PC-9 (cell line): ENCODE measurements at regions of chr6 and their contacts with region 1.

Region 1: GRCh38 chr6:117352466-117353081 is 73.2 kb downstream of the ROS1 start:
- DNase-seq: no peak
- H3K4me3 ChIP-seq: no peak overlapping the region
- H3K27ac ChIP-seq: no peak overlapping the region
- H3K4me1 ChIP-seq: no peaks in the 10 kb centered on the region
- H3K27me3 ChIP-seq: no peaks in the 10 kb centered on the region
- CTCF ChIP-seq: peak; percentile 85

Region 2: DNA sequence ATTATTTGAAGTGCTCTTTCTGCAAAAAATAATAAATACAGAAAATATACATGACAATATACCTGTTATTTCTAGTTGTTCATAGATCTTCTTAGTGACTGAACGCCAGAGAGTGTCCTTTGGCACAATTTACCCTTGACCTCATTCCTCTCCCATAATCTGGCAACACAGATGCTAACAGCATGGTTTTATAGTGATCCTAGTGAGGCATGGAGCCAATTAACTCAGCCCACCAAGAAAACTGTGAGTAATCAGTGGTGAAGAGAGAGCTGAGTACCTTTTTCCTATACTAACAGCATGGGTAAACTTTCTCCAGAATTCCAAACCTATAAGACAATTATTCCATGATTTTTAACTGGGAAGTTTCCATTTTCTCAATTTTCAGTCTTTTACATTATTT is 26.2 kb before region 1 on chr6:
- CTCF ChIA-PET with region 1: no interaction called
- POLR2A ChIA-PET with region 1: no interaction called
- intact Hi-C with region 1: no loop called
- DNase-seq: no peak
- H3K4me3 ChIP-seq: no peak overlapping the region
- H3K27ac ChIP-seq: no peak overlapping the region
- H3K4me1 ChIP-seq: no peaks in the 10 kb centered on the region
- H3K27me3 ChIP-seq: no peaks in the 10 kb centered on the region
- CTCF ChIP-seq: no peak

Region 3: GRCh38 chr6:117711369-117711768 is 358.8 kb after region 1 on chr6:
- CTCF ChIA-PET with region 1: no interaction called
- POLR2A ChIA-PET with region 1: no interaction called
- intact Hi-C with region 1: loop called (anchors 10 kb)
- DNase-seq: no peak
- H3K4me3 ChIP-seq: no peak overlapping the region
- H3K27ac ChIP-seq: no peak overlapping the region
- H3K4me1 ChIP-seq: no peaks in the 10 kb centered on the region
- H3K27me3 ChIP-seq: no peaks in the 10 kb centered on the region
- CTCF ChIP-seq: no peak; the same call in 1 of the 2 replicates